Gastrocnemius medialis (tissue), 4 donors: ENCODE measurements at regions of chr1 and their contacts with region 1.

Region 1: GRCh38 chr1:60898987-60899386 is 183.4 kb upstream of the NFIA start:
- DNase-seq: no peak
- ATAC-seq: no peak
- H3K4me3 ChIP-seq: no peak overlapping the region
- H3K27ac ChIP-seq: no peak overlapping the region
- H3K4me1 ChIP-seq: peaks cover 30 to 33% of the 10 kb centered on the region in 2 donors
- H3K27me3 ChIP-seq: no peaks in the 10 kb centered on the region
- CTCF ChIP-seq: no peak
- POLR2A ChIP-seq: no peak

Region 2: GRCh38 chr1:60825593-60825992 is 73.4 kb before region 1 on chr1:
- in situ Hi-C with region 1: no loop called
- intact Hi-C with region 1: no loop called
- DNase-seq: no peak
- ATAC-seq: no peak
- H3K4me3 ChIP-seq: no peak overlapping the region
- H3K27ac ChIP-seq: no peak overlapping the region
- H3K4me1 ChIP-seq: no peaks in the 10 kb centered on the region
- H3K27me3 ChIP-seq: no peaks in the 10 kb centered on the region
- CTCF ChIP-seq: no peak
- POLR2A ChIP-seq: no peak

Region 3: DNA sequence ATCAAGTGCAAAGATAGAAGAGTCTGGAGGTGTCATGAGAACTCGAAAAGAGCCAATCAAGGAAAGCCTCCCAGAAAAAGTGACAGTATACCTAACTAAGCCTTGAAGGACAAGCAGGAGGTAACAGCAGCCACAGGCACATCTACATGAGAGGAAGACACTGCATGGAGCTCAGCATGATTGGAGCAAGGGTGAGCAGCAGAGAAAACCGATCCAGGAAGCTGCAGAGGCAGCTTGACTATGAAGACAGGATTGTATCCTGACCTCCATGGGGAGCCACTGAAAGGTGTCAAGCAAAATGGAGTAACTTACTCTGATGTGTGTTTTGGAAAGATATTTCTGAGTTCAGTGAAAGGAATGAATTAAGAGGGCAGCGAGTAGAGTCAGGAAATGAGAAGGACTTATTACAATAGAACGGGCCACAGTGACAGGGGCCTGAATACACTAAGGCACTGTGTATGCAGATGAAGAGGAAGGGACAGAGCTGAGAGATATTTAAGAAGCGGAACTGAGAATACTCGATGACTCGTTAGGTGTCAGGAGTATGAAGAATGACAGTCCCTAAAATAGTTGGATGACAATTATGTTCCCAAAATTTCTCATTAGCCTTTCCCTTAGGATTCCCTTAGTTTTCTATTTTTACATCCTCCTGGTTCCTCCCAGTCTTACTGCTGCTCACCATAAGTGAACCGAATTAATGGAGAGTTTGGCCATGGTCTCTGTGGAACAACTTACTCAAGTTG is 44.1 kb after region 1 on chr1:
- in situ Hi-C with region 1: no loop called
- intact Hi-C with region 1: loop called (anchors 10 kb)
- DNase-seq: no peak
- ATAC-seq: peak; percentile 81 to 88
- H3K4me3 ChIP-seq: no peak overlapping the region
- H3K27ac ChIP-seq: peak overlapping the region in 3 of 4 donors; percentile 11 to 35 (median 24)
- H3K4me1 ChIP-seq: peaks cover 4 to 9% of the 10 kb centered on the region in 2 donors
- H3K27me3 ChIP-seq: no peaks in the 10 kb centered on the region
- CTCF ChIP-seq: no peak
- POLR2A ChIP-seq: no peak